Endothelial cell of umbilical vein (primary cell): ENCODE measurements at regions of chr1 and their contacts with region 1.

Region 1: GRCh38 chr1:199684686-199685273 is 342.7 kb upstream of the NR5A2 start:
- DNase-seq: peak; percentile 88
- H3K4me3 ChIP-seq: no peak overlapping the region
- H3K27ac ChIP-seq: peak overlapping the region; percentile 69
- H3K4me1 ChIP-seq: peaks cover 46% of the 10 kb centered on the region
- H3K27me3 ChIP-seq: no peaks in the 10 kb centered on the region
- CTCF ChIP-seq: peak; percentile 64 to 74
- POLR2A ChIP-seq: no peak

Region 2: GRCh38 chr1:199272643-199273086 is 412.1 kb before region 1 on chr1:
- CTCF ChIA-PET with region 1: no interaction called
- POLR2A ChIA-PET with region 1: no interaction called
- dilution Hi-C with region 1: no loop called
- intact Hi-C with region 1: loop called (anchors 10 kb)
- DNase-seq: peak; percentile 97
- H3K4me3 ChIP-seq: no peak overlapping the region
- H3K27ac ChIP-seq: peak overlapping the region; percentile 97
- H3K4me1 ChIP-seq: peaks cover 25% of the 10 kb centered on the region
- H3K27me3 ChIP-seq: no peaks in the 10 kb centered on the region
- CTCF ChIP-seq: no peak
- POLR2A ChIP-seq: peak; percentile 49

Region 3: GRCh38 chr1:199490804-199491527 is 193.8 kb before region 1 on chr1:
- CTCF ChIA-PET with region 1: no interaction called
- POLR2A ChIA-PET with region 1: no interaction called
- dilution Hi-C with region 1: no loop called
- intact Hi-C with region 1: no loop called
- DNase-seq: no peak
- H3K4me3 ChIP-seq: no peak overlapping the region
- H3K27ac ChIP-seq: no peak overlapping the region
- H3K4me1 ChIP-seq: no peaks in the 10 kb centered on the region
- H3K27me3 ChIP-seq: peaks cover 0 to 3% of the 10 kb centered on the region in 2 experiments
- CTCF ChIP-seq: no peak
- POLR2A ChIP-seq: no peak

Region 4: DNA sequence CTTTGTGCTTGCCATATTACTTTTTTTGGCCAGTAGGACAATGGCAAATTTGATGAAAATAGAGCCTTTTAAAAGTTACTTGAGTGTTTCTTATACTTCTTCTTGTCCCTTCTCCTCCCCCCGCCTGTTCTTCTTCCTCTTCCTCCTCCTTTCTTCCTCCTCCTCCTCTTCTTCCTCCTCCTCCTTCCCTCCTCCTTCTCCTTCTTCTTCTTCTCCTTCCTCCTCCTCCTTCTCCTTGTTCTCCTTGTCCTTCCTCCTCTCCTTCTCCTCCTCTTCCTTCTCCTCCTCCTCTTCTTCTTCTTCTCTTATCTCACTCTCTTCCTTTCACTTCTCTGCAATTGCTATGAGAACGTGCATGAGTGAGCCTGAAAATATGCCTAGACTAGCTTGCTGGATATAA is 123.4 kb before region 1 on chr1:
- CTCF ChIA-PET with region 1: no interaction called
- POLR2A ChIA-PET with region 1: no interaction called
- dilution Hi-C with region 1: no loop called
- intact Hi-C with region 1: no loop called
- DNase-seq: no peak
- H3K4me3 ChIP-seq: no peak overlapping the region
- H3K27ac ChIP-seq: no peak overlapping the region
- H3K4me1 ChIP-seq: no peaks in the 10 kb centered on the region
- H3K27me3 ChIP-seq: no peaks in the 10 kb centered on the region
- CTCF ChIP-seq: no peak
- POLR2A ChIP-seq: no peak

Region 5: GRCh38 chr1:199859491-199859933 is 174.7 kb after region 1 on chr1:
- CTCF ChIA-PET with region 1: interaction called, 6 read pairs
- POLR2A ChIA-PET with region 1: no interaction called
- dilution Hi-C with region 1: no loop called
- intact Hi-C with region 1: loop called (anchors 1 kb)
- DNase-seq: peak; percentile 97
- H3K4me3 ChIP-seq: no peak overlapping the region
- H3K27ac ChIP-seq: peak overlapping the region; percentile 31
- H3K4me1 ChIP-seq: peaks cover 42% of the 10 kb centered on the region
- H3K27me3 ChIP-seq: no peaks in the 10 kb centered on the region
- CTCF ChIP-seq: no peak
- POLR2A ChIP-seq: no peak

Region 6: DNA sequence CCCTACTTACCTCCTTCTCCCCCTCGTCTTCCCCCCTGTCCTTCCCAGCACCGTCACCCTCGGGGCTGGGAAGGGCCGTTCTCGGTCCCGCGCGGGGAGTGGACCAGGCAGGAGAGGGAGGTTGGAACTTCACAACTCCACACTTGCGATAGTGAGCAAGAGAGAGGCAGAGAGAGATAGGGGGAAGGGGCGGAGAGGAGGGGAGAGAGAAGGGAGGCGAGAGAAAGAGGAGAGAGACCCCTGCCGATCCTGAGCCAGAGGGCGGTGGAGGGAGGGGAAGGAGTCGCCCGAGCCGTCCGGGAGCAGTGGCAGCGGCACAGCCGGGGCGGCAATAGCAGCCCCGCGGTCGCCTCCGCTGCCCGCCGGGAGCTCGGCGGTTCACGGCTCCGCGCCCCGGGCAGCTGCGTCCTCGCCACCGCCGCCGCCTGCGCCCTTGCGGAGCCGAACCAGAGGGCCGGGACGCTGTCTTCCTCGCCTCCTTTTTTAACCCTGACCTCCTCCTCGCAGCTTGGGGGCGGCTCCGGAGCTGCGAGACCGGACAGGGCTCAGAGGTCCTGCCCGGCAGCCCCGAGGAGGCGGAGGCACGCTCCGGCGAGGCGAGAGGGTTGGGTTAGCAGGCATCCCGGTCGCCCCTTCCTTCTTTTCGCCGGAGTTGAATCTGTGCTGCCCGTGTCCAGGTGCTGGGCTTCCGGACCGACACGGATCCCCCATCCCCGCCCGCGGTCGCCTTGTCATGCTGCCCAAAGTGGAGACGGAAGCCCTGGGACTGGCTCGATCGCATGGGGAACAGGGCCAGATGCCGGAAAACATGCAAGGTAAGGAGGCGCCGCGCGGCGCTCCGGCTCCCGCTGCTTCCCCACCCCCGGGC is 354.4 kb after region 1 on chr1:
- CTCF ChIA-PET with region 1: interaction called, 59 read pairs
- POLR2A ChIA-PET with region 1: interaction called, 3 read pairs
- dilution Hi-C with region 1: no loop called
- intact Hi-C with region 1: loop called (anchors 1 kb)
- DNase-seq: peak; percentile 65
- H3K4me3 ChIP-seq: peak overlapping the region; percentile 11 to 75 (median 59)
- H3K27ac ChIP-seq: no peak overlapping the region
- H3K4me1 ChIP-seq: peaks cover 22% of the 10 kb centered on the region
- H3K27me3 ChIP-seq: peaks cover 15 to 97% of the 10 kb centered on the region in 2 experiments
- CTCF ChIP-seq: no peak
- POLR2A ChIP-seq: no peak

Region 7: GRCh38 chr1:200075938-200076550 is 391.3 kb after region 1 on chr1:
- CTCF ChIA-PET with region 1: interaction called, 10 read pairs
- POLR2A ChIA-PET with region 1: no interaction called
- dilution Hi-C with region 1: no loop called
- intact Hi-C with region 1: loop called (anchors 1 kb)
- DNase-seq: peak; percentile 99
- H3K4me3 ChIP-seq: peak overlapping the region in 1 of 3 experiments; percentile 50
- H3K27ac ChIP-seq: peak overlapping the region; percentile 94
- H3K4me1 ChIP-seq: peaks cover 45% of the 10 kb centered on the region
- H3K27me3 ChIP-seq: no peaks in the 10 kb centered on the region
- CTCF ChIP-seq: no peak
- POLR2A ChIP-seq: peak; percentile 53

Region 8: DNA sequence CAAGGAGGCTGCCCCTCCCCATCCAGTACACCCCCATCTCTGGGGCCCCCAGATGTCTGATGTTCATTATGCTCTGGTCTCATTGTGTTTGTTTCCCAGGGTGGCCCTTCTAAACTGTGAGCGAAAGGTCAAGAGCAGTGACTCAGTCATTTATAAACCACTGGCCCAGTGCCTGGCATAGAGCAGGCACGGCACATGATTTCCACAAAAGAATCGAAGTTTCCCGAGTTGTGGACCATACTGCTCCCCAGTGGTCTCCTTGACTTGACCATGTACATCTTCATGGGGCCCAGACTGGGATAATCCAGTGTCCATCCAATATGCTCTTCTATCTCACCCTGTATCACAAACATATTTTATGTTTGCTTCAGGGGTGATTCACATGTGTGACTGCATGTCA is 496.0 kb after region 1 on chr1:
- CTCF ChIA-PET with region 1: interaction called, 12 read pairs
- POLR2A ChIA-PET with region 1: no interaction called
- dilution Hi-C with region 1: no loop called
- intact Hi-C with region 1: loop called (anchors 1 kb)
- DNase-seq: peak; percentile 78
- H3K4me3 ChIP-seq: no peak overlapping the region
- H3K27ac ChIP-seq: no peak overlapping the region
- H3K4me1 ChIP-seq: peaks cover 31% of the 10 kb centered on the region
- H3K27me3 ChIP-seq: no peaks in the 10 kb centered on the region
- CTCF ChIP-seq: no peak
- POLR2A ChIP-seq: no peak

Region 9: GRCh38 chr1:200488375-200489165 is 803.8 kb after region 1 on chr1:
- CTCF ChIA-PET with region 1: interaction called, 17 read pairs
- POLR2A ChIA-PET with region 1: no interaction called
- dilution Hi-C with region 1: no loop called
- intact Hi-C with region 1: loop called (anchors 1 kb)
- DNase-seq: peak; percentile 72
- H3K4me3 ChIP-seq: no peak overlapping the region
- H3K27ac ChIP-seq: no peak overlapping the region
- H3K4me1 ChIP-seq: peaks cover 10% of the 10 kb centered on the region
- H3K27me3 ChIP-seq: peaks cover 0 to 2% of the 10 kb centered on the region in 2 experiments
- CTCF ChIP-seq: peak; percentile 71 to 73
- POLR2A ChIP-seq: no peak